ENCODE measurements at regions of chr11 and their contacts with region 1.

Region 1: GRCh38 chr11:96389720-96390487 is at the starts of genes CCDC82 and JRKL:
- DNase-seq: peak; percentile 99
- ATAC-seq: peak; percentile 98
- H3K4me3 Mint-ChIP-seq: peak within 1 kb of the TSS; percentile 94
- H3K27ac Mint-ChIP-seq: peak within 1 kb of the TSS; percentile 90
- H3K4me1 Mint-ChIP-seq: peaks cover 33% of the 10 kb centered on the region
- H3K27me3 Mint-ChIP-seq: no peaks in the 10 kb centered on the region
- CTCF ChIP-seq: no peak
- total RNA-seq, gene CCDC82: 22.6 and 33.8 TPM in 2 replicates
- total RNA-seq, gene JRKL: 9.6 and 9.8 TPM in 2 replicates

Region 2: GRCh38 chr11:94973099-94973968 is 1416.6 kb before region 1 on chr11 and contains the starts of genes CWC15 and KDM4D:
- CTCF ChIA-PET with region 1: no interaction called
- POLR2A ChIA-PET with region 1: interaction called, 3 read pairs
- intact Hi-C with region 1: loop called (anchors 1 kb)
- DNase-seq: peak; percentile 87
- ATAC-seq: peak; percentile 100
- H3K4me3 Mint-ChIP-seq: peak within 1 kb of the TSS; percentile 99
- H3K27ac Mint-ChIP-seq: peak within 1 kb of the TSS; percentile 95
- H3K4me1 Mint-ChIP-seq: peaks cover 20% of the 10 kb centered on the region
- H3K27me3 Mint-ChIP-seq: no peaks in the 10 kb centered on the region
- CTCF ChIP-seq: no peak
- total RNA-seq, gene CWC15: 69.1 and 69.2 TPM in 2 replicates
- total RNA-seq, gene KDM4D: 0.67 and 0.93 TPM in 2 replicates

Region 3: DNA sequence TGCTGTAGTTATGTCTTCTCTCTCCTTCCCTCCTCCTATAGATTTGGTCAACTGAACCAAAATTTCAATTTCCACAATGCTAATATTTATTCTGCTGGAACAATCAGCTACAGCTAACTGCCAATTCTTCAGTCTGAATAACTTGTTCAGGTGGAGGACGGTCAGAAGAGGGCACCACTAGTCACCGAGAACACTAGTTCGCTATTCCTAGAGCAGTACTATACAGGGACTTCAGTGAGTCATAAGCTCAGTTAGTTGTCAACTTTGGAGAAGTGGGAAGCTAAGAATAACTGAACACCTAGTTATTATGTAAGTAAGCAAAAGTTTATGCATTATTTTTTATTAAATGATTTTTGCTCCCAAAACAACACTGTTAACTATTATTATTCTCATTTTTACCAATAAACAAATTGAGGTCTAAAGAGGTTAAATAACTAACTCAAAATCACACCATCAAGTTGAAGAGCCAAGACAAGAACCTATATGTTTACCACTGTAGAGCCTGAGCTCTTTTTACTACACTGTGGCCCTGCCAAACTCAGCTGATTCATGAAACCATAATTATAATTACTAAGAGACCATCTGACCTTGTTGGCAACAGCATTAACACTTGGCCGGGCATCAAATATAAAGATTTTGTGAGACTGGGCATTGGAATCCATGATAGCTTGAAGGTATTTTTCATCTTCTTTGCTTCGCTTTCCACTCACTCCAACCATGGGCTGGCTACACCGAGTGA is 540.6 kb before region 1 on chr11:
- CTCF ChIA-PET with region 1: interaction called, 32 read pairs
- POLR2A ChIA-PET with region 1: no interaction called
- intact Hi-C with region 1: loop called (anchors 1 kb)
- DNase-seq: no peak
- ATAC-seq: peak; percentile 52
- H3K4me3 Mint-ChIP-seq: no peak overlapping the region
- H3K27ac Mint-ChIP-seq: no peak overlapping the region
- H3K4me1 Mint-ChIP-seq: no peaks in the 10 kb centered on the region
- H3K27me3 Mint-ChIP-seq: no peaks in the 10 kb centered on the region
- CTCF ChIP-seq: no peak

Region 4: DNA sequence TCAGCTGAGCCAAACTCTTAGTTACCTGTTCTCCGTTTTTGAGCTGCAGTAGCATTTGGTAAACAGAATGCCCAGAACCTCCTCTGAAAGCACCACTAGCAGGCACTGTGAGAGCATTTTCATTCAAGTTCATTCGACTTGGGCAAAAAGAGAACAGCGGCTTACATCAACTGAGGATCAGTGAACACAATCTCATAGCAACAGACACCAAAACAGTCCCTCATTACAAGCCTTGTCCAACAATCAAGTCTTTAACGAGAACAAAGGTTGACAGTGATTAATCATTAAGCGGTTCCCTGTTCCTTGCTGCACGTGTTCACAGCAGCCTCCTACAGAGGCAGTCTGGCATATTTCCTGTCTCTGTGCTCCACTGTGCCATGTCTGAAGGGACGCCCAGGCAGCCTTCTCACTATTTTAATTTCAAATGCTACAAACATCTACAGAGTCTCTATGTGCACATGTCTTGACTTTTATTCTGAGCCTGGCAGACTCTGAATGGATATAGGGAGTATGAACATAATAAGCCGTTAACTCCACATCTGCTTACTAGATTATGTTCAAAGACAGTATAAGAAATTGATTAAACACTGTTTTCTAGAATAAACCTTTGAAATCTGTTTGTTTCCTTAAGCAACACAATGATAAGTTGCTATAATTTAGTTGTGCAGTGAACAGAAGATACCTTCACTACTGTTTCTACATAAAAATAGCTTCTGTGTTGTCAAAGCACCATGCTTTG is 377.6 kb before region 1 on chr11:
- CTCF ChIA-PET with region 1: interaction called, 8 read pairs
- POLR2A ChIA-PET with region 1: interaction called, 4 read pairs
- intact Hi-C with region 1: loop called (anchors 1 kb)
- DNase-seq: peak; percentile 21
- ATAC-seq: peak; percentile 91
- H3K4me3 Mint-ChIP-seq: peak overlapping the region; percentile 46
- H3K27ac Mint-ChIP-seq: peak overlapping the region; percentile 85
- H3K4me1 Mint-ChIP-seq: peaks cover 44% of the 10 kb centered on the region
- H3K27me3 Mint-ChIP-seq: no peaks in the 10 kb centered on the region
- CTCF ChIP-seq: no peak

Region 5: DNA sequence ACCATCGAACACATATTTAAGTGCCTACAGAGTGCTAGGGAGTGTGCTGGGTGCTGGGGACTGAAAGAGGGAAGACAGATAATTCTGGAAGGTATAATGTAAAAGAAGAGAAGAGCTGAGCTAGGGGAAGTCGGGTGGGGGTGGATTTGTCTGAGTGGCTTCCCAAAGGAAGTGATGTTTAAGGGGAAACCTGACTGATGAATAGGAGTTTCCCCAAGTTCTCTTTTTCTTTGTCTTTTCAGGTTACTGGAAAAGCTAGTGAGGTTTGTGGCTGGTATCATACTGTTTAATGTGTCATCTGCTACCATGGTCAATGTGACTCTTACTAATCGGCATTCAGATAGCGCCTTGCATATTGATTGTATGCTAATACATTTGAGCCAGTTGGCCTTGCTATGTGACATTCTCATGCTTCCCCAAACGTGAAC is 314.4 kb before region 1 on chr11:
- CTCF ChIA-PET with region 1: interaction called, 4 read pairs
- POLR2A ChIA-PET with region 1: no interaction called
- intact Hi-C with region 1: loop called (anchors 1 kb)
- DNase-seq: no peak
- ATAC-seq: peak; percentile 81
- H3K4me3 Mint-ChIP-seq: peak overlapping the region; percentile 66
- H3K27ac Mint-ChIP-seq: peak overlapping the region; percentile 83
- H3K4me1 Mint-ChIP-seq: peaks cover 44% of the 10 kb centered on the region
- H3K27me3 Mint-ChIP-seq: no peaks in the 10 kb centered on the region
- CTCF ChIP-seq: no peak

Region 6: DNA sequence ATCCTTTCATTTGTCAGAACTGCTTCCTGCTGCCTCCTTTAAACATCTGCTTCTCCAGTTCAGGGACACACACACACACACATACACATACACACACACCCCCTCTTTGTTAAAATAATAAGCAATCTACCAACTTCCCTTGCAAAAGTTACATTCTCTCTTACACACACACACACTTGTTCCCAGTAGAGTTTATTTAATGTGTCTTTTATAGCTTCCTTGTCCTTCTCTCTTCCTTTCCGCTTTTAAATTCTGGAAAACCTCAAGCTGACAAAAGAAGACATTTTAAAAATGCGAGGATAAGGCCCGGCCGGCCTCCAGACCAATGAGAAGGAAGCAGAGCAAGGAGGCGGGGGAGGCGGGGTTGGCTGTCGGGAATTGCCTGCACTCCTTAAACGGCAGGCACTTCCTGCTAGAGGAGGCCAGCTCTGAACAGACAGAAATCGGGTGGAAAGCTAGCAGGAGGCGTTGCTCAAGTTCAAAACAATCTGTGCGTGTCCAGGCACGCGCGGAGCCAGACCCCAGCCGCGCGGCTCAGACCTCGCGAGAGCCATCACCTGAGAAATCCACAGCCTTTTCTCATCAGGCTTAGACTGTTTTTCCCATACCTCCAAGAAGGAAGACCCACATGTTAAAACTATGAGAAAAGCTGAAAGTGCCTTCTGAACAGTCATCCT is 146.8 kb before region 1 on chr11:
- CTCF ChIA-PET with region 1: interaction called, 3 read pairs
- POLR2A ChIA-PET with region 1: interaction called, 9 read pairs
- intact Hi-C with region 1: loop called (anchors 5 kb)
- DNase-seq: peak; percentile 51
- ATAC-seq: peak; percentile 87
- H3K4me3 Mint-ChIP-seq: peak overlapping the region; percentile 90
- H3K27ac Mint-ChIP-seq: peak overlapping the region; percentile 95
- H3K4me1 Mint-ChIP-seq: peaks cover 53% of the 10 kb centered on the region
- H3K27me3 Mint-ChIP-seq: no peaks in the 10 kb centered on the region
- CTCF ChIP-seq: no peak